ENCODE measurements at regions of chr20 and their contacts with region 1.

Region 1: DNA sequence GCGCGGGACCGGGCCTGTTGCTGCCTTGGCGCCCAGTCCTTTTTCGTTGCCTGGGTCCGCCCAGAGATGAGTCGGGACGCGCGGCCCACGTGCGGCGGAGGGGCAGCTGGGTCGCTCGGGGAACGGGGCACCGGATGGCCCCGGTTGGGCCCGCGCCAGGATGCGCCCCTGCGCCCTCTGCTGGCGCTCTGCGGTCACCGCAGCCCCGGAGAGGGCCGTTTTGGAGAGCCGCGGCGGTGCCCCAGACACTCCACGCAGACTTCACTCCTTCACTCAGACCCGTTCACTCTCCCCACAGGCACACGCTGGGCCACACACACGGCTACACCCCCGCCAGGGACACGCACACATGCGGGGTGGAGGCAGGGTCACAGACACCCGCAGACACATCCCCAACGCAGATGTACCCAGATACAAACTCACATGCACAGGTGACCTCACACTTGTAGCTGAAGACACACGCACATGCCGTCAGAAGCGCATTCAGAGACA is 38.8 kb downstream of the SRC start:
- DNase-seq: peak; percentile 82
- ATAC-seq: peak; percentile 79
- H3K4me3 Mint-ChIP-seq: peak overlapping the region; percentile 72
- H3K27ac Mint-ChIP-seq: peak overlapping the region; percentile 68
- H3K4me1 Mint-ChIP-seq: peaks cover 4% of the 10 kb centered on the region
- H3K27me3 Mint-ChIP-seq: no peaks in the 10 kb centered on the region
- CTCF ChIP-seq: peak; percentile 97

Region 2: GRCh38 chr20:37270576-37271420 is 113.9 kb before region 1 on chr20:
- CTCF ChIA-PET with region 1: interaction called, 35 read pairs
- POLR2A ChIA-PET with region 1: no interaction called
- DNase-seq: no peak
- ATAC-seq: no peak
- H3K4me3 Mint-ChIP-seq: no peak overlapping the region
- H3K27ac Mint-ChIP-seq: no peak overlapping the region
- H3K4me1 Mint-ChIP-seq: peaks cover 39% of the 10 kb centered on the region
- H3K27me3 Mint-ChIP-seq: no peaks in the 10 kb centered on the region; the same call in 1 of the 2 replicates
- CTCF ChIP-seq: no peak

Region 3: GRCh38 chr20:37282556-37282955 is 102.2 kb before region 1 on chr20:
- CTCF ChIA-PET with region 1: interaction called, 18 read pairs
- POLR2A ChIA-PET with region 1: no interaction called
- DNase-seq: no peak
- ATAC-seq: peak; percentile 61
- H3K4me3 Mint-ChIP-seq: no peak overlapping the region
- H3K27ac Mint-ChIP-seq: peak overlapping the region; percentile 37; the same call in 1 of the 2 replicates
- H3K4me1 Mint-ChIP-seq: peaks cover 16% of the 10 kb centered on the region
- H3K27me3 Mint-ChIP-seq: peaks cover 14% of the 10 kb centered on the region
- CTCF ChIP-seq: no peak